MCF 10A (cell line): ENCODE measurements at regions of chr1 and their contacts with region 1.

Region 1: GRCh38 chr1:157380523-157380922 is 171.8 kb downstream of the FCRL5 start:
- DNase-seq: no peak
- H3K4me3 Mint-ChIP-seq: no peak overlapping the region
- H3K27ac Mint-ChIP-seq: no peak overlapping the region
- H3K4me1 Mint-ChIP-seq: peaks cover 6% of the 10 kb centered on the region
- H3K27me3 Mint-ChIP-seq: no peaks in the 10 kb centered on the region
- CTCF ChIP-seq: no peak

Region 2: GRCh38 chr1:157363660-157364140 is 16.8 kb before region 1 on chr1:
- CTCF ChIA-PET with region 1: interaction called, 35 read pairs
- POLR2A ChIA-PET with region 1: no interaction called
- intact Hi-C with region 1: no loop called
- DNase-seq: peak; percentile 73
- H3K4me3 Mint-ChIP-seq: no peak overlapping the region
- H3K27ac Mint-ChIP-seq: no peak overlapping the region
- H3K4me1 Mint-ChIP-seq: peaks cover 8% of the 10 kb centered on the region
- H3K27me3 Mint-ChIP-seq: peaks cover 13% of the 10 kb centered on the region
- CTCF ChIP-seq: peak; percentile 75

Region 3: GRCh38 chr1:157482174-157482573 is 101.7 kb after region 1 on chr1:
- CTCF ChIA-PET with region 1: interaction called, 74 read pairs
- POLR2A ChIA-PET with region 1: no interaction called
- intact Hi-C with region 1: no loop called
- DNase-seq: peak; percentile 29
- H3K4me3 Mint-ChIP-seq: no peak overlapping the region
- H3K27ac Mint-ChIP-seq: no peak overlapping the region
- H3K4me1 Mint-ChIP-seq: no peaks in the 10 kb centered on the region
- H3K27me3 Mint-ChIP-seq: no peaks in the 10 kb centered on the region
- CTCF ChIP-seq: no peak

Region 4: DNA sequence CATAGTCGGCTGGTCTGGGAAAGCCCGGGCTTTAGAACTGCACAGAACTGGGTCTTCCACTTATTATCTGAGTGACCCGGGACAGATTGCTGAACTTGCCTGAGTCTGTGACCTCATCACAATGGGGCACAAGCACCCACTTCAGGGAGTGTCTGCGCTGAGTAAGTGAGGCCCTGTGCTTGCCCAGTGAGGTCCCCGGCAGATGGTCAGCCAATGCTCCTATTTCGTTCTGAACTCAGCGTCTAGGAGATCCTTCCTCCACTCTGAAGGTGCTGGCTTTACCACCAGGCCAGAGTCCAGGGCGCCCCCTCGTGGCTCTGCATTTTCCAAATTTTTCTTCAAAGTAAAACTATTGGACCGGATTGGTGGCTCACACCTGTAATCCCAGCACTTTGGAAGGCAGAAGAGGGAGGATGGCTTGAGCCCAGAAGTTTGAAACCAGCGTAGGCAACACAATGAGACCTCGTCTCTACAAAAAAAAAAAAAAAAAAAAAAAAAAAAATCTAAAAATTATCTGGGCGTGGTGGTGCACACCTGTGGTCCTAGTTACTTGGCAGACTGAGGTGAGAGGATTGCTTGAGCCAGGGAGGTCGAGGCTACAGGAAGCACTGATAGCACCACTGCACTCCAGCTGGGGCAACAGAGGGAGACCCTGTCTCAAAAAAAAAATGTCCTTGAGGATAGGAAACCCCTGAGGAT is 110.1 kb after region 1 on chr1:
- CTCF ChIA-PET with region 1: interaction called, 74 read pairs
- POLR2A ChIA-PET with region 1: interaction called, 3 read pairs
- intact Hi-C with region 1: loop called (anchors 1 kb)
- DNase-seq: peak; percentile 80
- H3K4me3 Mint-ChIP-seq: no peak overlapping the region
- H3K27ac Mint-ChIP-seq: no peak overlapping the region
- H3K4me1 Mint-ChIP-seq: peaks cover 5% of the 10 kb centered on the region
- H3K27me3 Mint-ChIP-seq: peaks cover 44% of the 10 kb centered on the region
- CTCF ChIP-seq: peak; percentile 82